Motor neuron (in vitro differentiated cells): ENCODE measurements at regions of chr1 and their contacts with region 1.

Region 1: GRCh38 chr1:108512239-108512981 is 47.5 kb upstream of the EEIG2 start:
- ATAC-seq: peak in 4 of 8 experiments; percentile 16 to 45 (median 20)
- H3K4me3 ChIP-seq: no peak overlapping the region
- H3K27ac ChIP-seq: no peak overlapping the region
- H3K4me1 ChIP-seq: peaks cover 0 to 3% of the 10 kb centered on the region in 2 donors

Region 2: DNA sequence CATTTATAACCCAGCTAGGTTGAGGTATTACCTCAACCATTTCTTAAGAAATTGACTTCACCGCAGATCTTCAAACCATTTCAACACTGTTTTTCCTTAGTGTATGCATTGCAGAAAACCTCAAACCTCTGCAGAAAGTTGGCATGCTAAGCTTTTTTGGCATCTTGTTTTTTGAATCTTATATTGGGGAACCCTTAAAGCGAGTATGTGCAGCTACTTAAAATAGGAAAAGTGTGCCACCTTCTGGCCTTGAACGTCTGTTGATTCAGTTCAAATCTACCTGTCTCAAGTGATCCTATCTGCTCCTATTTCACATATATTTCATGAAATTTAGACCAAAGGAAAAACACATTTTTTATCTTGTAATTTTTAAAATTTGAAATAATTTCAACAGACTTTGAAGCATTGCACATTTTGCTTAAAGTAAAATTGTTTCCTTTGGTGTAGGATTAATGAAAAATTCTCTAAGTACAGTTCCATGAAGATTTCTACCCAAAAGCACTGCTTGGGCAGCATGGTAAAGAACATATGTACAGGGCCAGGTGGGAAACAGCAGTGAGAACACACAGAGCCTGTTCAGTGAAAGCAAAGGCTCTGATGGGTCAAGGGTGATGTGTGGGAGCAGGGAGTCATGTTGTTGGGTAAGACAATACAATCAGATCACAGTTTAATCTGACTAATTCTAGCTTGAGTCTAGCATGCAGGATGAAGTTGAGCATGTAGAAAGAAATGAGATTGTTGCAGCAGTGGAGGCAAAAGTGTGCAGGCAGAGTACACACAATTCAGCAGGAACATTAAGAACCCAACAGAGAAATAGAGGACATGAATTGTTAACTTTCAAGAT is 131.3 kb after region 1 on chr1:
- in situ Hi-C with region 1: loop called in 1 of 9 experiments (anchors 10 kb)
- ATAC-seq: peak; percentile 46 to 86 (median 64)
- H3K4me3 ChIP-seq: no peak overlapping the region
- H3K27ac ChIP-seq: no peak overlapping the region
- H3K4me1 ChIP-seq: peaks cover 0 to 3% of the 10 kb centered on the region in 2 donors